A549 (cell line): ENCODE measurements at regions of chr9 and their contacts with region 1.

Region 1: GRCh38 chr9:32384364-32385151 is at the start of gene ACO1:
- DNase-seq: peak; percentile 73 to 84
- ATAC-seq: peak; percentile 90 to 97
- H3K4me3 ChIP-seq: peak within 1 kb of the TSS; percentile 81
- H3K27ac ChIP-seq: peak within 1 kb of the TSS; percentile 62 to 89
- H3K4me1 ChIP-seq: peaks cover 5% of the 10 kb centered on the region; the same call in 1 of the 3 replicates
- CTCF ChIP-seq: no peak
- EP300 ChIP-seq: no peak
- POLR2A ChIP-seq: peak; percentile 85
- RAD21 ChIP-seq: peak in 1 of 2 experiments; percentile 18; a peak in 1 of 5 replicates
- polyA plus RNA-seq, gene ACO1: 40.2 and 41.0 TPM in 2 replicates

Region 2: DNA sequence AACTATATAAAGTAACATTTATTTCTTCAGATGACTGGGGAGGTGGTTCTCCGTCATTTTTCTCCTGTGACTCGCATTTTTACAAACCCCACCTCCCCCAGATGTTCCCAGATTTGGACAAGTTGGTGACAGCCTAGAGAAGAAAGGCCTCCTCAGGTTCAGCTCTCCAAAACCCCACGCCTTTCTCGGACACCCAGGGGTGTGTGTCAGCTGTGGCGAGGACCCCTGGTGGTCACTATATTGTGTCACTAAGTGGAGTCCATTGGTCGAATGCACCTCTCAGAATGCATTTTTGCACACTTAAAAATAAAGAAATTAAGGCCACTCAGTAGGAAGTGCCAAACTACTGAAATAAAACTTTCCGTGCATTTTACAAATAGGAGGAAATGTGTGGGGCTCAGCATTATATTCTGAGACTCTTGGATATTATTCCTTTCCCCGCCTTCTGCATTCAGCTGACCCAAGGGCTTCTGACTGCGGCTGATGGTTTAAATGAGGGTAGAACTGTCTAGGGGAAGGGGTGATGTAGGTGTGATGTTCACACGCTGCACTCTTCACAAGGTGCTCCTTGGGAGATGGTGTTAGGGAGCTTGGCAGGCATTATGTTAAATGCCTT is 47.5 kb after region 1 on chr9:
- CTCF ChIA-PET with region 1: interaction called, 159 read pairs
- POLR2A ChIA-PET with region 1: no interaction called
- DNase-seq: peak; percentile 17 to 25
- ATAC-seq: peak; percentile 77 to 88; a peak in 5 of 6 replicates
- H3K4me3 ChIP-seq: no peak overlapping the region
- H3K27ac ChIP-seq: no peak overlapping the region
- H3K4me1 ChIP-seq: peaks cover 7% of the 10 kb centered on the region
- CTCF ChIP-seq: peak; percentile 59
- EP300 ChIP-seq: no peak
- POLR2A ChIP-seq: no peak
- RAD21 ChIP-seq: peak; percentile 36 to 42; a peak in 3 of 5 replicates